ENCODE measurements at regions of chr19 and their contacts with region 1.

Region 1: GRCh38 chr19:58278157-58279041 is at the start of gene ZNF8:
- DNase-seq: peak; percentile 99
- H3K4me3 Mint-ChIP-seq: peak within 1 kb of the TSS; percentile 88
- H3K27ac Mint-ChIP-seq: peak within 1 kb of the TSS; percentile 93
- H3K4me1 Mint-ChIP-seq: peaks cover 25% of the 10 kb centered on the region
- H3K27me3 Mint-ChIP-seq: no peaks in the 10 kb centered on the region
- total RNA-seq, gene ZNF8: 3.2 to 3.6 TPM

Region 2: DNA sequence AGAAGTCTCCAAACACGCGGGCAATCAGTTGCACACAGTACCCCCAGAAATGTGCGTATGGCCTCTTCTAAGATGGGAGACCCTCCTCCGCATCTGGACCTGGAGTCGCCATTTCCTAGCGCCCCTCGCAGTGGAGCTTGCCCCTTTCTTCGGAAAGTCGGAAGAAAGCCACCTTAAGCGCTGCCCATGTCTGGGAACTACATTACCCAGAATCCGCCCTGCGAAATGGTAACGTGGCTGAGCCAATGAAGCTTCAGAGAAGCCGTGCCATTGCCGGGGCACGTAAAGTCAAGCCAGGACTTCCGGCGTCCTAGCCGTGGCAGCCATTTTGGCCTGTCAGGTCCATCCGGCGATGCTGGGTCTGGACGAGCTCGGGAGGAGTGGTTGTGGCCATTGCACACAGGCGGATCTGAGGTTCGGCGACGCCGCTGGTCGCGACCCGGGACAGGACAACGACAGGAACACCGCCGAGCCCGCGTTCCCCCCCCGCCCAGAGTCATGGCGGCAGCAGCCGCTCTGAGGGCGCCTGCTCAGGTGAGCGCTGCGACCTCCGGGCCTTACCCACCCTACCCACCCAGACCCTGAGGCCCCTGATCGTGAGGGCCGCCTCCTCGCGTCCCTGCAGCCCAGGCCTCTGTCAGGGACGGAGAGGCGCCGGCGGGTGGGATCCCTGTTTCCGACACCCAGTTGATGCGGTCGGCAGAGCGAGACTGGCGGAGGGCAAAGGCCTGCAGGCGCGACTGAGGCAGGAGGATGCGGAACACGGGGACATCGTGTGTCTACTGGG is 508.9 kb before region 1 on chr19 and contains the start of gene ZNF586:
- CTCF ChIA-PET with region 1: no interaction called
- intact Hi-C with region 1: loop called (anchors 1 kb)
- DNase-seq: peak; percentile 93
- H3K4me3 Mint-ChIP-seq: peak within 1 kb of the TSS; percentile 91
- H3K27ac Mint-ChIP-seq: peak within 1 kb of the TSS; percentile 89
- H3K4me1 Mint-ChIP-seq: peaks cover 34% of the 10 kb centered on the region
- H3K27me3 Mint-ChIP-seq: no peaks in the 10 kb centered on the region
- total RNA-seq, gene ZNF586: 14.5 to 14.9 TPM

Region 3: DNA sequence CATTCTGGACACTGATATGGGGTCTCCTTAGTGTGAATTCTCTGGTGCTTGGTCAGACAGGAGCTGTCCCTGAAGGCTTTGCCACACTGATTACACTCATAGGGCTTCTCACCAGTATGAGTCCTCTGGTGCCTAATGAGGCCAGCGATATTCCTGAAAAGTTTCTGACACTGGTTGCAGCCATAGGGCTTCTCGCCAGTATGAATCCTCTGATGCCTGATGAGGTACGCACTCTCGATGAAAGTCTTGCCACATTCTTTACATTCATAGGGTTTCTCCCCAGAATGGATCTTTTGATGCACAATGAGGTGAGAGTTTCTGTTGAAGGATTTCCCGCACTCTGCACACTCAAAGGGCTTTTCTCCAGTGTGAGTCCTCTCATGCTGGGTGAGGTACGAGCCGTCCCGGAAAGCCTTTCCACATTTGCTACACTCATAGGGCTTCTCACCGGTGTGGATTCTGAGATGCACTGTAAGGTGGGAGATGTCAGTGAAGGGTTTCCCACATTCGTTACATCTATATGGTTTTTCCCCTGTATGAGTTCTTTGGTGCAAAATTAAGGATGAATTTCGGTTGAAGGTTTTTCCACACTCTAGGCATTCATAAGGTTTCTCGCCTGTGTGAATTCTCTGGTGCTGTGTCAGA is 150.2 kb before region 1 on chr19:
- CTCF ChIA-PET with region 1: no interaction called
- intact Hi-C with region 1: no loop called
- DNase-seq: no peak
- H3K4me3 Mint-ChIP-seq: no peak overlapping the region
- H3K27ac Mint-ChIP-seq: no peak overlapping the region
- H3K4me1 Mint-ChIP-seq: no peaks in the 10 kb centered on the region
- H3K27me3 Mint-ChIP-seq: no peaks in the 10 kb centered on the region

Region 4: DNA sequence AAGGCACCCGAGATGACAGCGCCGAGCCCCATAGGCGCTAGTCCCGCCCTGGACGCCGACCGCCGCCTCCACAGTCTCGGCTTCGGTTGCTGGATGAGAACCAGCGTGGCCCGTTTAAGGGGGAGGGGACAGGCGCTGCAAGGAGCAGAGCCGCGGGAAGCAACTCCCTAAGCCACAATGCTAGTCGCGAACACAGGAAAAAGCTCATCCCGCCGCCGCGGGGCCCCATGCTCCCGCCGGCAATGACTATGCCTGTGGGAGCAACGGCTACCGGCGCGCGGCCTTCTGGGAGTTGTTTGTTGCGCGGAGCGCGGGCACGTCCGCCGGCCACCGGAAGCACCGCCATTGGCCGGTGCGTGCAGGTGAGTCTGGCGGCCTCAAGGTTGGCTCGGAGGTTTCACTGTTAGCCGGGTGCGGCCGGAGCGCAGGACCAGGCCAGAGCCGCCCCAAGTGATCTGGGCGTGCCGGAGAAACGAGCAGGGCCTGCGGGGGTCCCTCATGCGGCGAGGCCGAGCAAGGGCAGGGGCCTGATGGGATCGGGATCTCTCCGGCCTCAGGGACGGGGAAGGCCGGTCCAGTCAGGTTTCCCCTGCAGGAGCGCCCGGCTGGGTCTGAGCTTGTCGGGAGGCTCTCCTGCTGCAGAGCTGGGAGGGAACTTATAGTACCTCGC is 49.7 kb before region 1 on chr19 and contains the start of gene ZNF544:
- CTCF ChIA-PET with region 1: interaction called, 3 read pairs
- intact Hi-C with region 1: loop called (anchors 2 kb)
- DNase-seq: peak; percentile 76
- H3K4me3 Mint-ChIP-seq: peak within 1 kb of the TSS; percentile 94
- H3K27ac Mint-ChIP-seq: peak within 1 kb of the TSS; percentile 92
- H3K4me1 Mint-ChIP-seq: peaks cover 29% of the 10 kb centered on the region
- H3K27me3 Mint-ChIP-seq: no peaks in the 10 kb centered on the region
- total RNA-seq, gene ZNF544: 32.4 to 35.4 TPM

Region 5: GRCh38 chr19:58326914-58327726 is 48.7 kb after region 1 on chr19 and contains the start of gene ZSCAN22:
- CTCF ChIA-PET with region 1: no interaction called
- intact Hi-C with region 1: loop called (anchors 2 kb)
- DNase-seq: peak; percentile 95
- H3K4me3 Mint-ChIP-seq: no peak within 1 kb of the TSS
- H3K27ac Mint-ChIP-seq: no peak within 1 kb of the TSS
- H3K4me1 Mint-ChIP-seq: no peaks in the 10 kb centered on the region
- H3K27me3 Mint-ChIP-seq: no peaks in the 10 kb centered on the region
- total RNA-seq, gene ZSCAN22: 1.2 to 1.3 TPM

Region 6: GRCh38 chr19:58386576-58387337 is 108.4 kb after region 1 on chr19 and contains the start of gene RPS5:
- CTCF ChIA-PET with region 1: no interaction called
- intact Hi-C with region 1: loop called (anchors 2 kb)
- DNase-seq: peak; percentile 97
- H3K4me3 Mint-ChIP-seq: peak within 1 kb of the TSS; percentile 91
- H3K27ac Mint-ChIP-seq: peak within 1 kb of the TSS; percentile 96
- H3K4me1 Mint-ChIP-seq: peaks cover 35% of the 10 kb centered on the region
- H3K27me3 Mint-ChIP-seq: no peaks in the 10 kb centered on the region
- total RNA-seq, gene RPS5: 1,806 to 1,853 TPM

Region 7: GRCh38 chr19:58475714-58476497 is 197.5 kb after region 1 on chr19 and contains the start of gene ZNF446:
- CTCF ChIA-PET with region 1: no interaction called
- intact Hi-C with region 1: loop called (anchors 1 kb)
- DNase-seq: peak; percentile 97
- H3K4me3 Mint-ChIP-seq: peak within 1 kb of the TSS; percentile 94
- H3K27ac Mint-ChIP-seq: peak within 1 kb of the TSS; percentile 97
- H3K4me1 Mint-ChIP-seq: peaks cover 13% of the 10 kb centered on the region
- H3K27me3 Mint-ChIP-seq: no peaks in the 10 kb centered on the region
- total RNA-seq, gene ZNF446: 2.6 to 2.9 TPM

Region 8: DNA sequence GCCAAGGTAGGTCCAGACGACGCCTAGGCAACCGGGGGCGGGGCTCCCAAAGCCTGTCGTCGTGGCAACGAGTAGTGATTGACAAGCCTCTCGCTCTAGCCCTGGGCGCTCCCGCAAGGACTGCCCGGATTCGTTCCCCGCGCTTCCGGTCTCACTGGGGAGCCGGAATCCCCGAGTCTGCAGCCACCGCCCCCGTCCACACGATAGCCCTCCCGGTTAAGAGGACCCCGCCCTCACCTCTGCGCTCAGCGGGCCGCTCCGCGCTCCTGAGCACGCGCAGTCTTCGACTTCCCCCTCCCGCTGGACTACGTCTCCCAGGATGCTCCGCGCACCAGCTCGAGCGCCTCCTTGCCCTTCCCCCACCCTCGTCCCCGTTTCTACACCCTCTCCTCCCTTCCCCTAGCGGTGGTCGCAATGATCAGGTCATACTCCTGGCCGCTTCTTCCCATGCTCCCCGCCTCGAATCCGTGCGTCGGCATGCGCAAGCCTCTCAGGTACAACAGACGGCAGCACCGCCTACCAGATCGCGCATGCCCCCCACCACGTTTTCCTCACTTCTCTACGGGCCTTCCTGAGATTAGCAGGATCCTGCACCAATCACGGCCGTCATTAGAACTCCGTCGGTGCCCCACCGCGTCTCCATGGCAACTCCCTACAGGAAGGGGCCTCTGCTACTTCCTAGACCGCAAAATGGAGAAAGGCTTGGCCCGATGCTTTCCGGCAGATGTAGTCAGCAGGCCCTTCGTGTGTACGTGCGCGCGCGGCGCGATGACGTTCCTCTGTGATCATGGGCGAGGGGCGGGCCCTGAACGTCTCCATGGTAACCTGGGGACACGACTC is 294.6 kb after region 1 on chr19 and contains the start of gene MZF1:
- CTCF ChIA-PET with region 1: no interaction called
- intact Hi-C with region 1: loop called (anchors 1 kb)
- DNase-seq: peak; percentile 100
- H3K4me3 Mint-ChIP-seq: peak within 1 kb of the TSS; percentile 96
- H3K27ac Mint-ChIP-seq: peak within 1 kb of the TSS; percentile 99
- H3K4me1 Mint-ChIP-seq: peaks cover 39% of the 10 kb centered on the region
- H3K27me3 Mint-ChIP-seq: no peaks in the 10 kb centered on the region
- total RNA-seq, gene MZF1: 13.3 to 13.4 TPM